HEK293T (cell line): ENCODE measurements at regions of chr19 and their contacts with region 1.

Region 1: DNA sequence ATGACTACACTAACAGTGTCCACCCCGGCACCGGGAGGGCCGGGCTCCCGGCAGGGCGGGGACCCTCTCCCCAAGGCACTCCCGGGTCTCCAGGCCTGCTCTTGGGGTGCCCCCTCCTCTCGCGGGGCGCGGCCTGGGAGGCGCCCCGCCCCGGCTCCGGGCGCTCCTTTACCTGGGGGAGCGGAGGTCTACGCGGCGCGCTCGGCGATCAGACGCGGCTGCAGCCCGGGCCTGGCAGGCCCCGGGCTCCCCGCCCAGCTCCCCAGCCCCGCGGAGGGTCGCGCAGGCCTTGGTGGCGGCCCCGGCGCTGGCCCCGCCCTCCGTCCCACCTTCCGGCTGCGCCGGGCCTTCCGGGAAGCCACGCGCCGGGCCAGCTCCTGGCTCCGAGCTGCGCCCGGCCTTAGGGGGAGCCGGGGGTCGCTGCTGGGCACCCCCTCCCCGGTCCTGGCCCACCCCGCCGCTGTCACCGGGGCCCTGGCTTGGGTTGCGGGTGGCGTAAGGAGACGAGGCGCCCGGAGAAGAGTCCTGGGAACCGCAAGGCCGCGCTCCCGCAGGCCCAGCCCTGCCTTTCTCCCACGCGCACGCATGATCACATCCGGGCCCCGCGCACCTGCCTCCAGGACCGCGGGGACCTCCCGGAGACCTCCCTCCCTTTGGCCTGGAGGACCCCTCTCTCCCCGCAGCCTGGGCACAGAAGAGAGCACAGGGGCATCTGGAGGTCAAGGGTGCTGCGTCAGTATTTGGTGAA is at the start of gene C19orf12:
- DNase-seq: peak; percentile 79

Region 2: DNA sequence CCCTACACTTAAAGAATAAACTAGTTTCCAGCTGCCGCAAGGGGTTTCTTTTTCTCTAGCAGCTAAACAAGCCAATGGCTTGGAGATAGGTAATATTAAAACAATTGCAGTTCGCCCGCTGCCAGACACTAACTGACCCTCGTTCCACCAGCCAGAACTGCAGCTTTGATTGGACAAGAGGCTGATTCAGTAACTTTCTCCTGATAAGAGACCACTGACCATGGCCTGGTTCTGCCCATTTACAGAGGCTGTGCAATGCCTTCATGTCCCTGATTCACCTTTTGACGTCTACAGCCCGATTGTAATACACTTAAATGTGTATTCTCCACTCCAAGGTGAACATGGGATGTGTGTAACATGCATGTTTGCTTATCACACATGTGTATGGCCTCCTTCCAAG is 12.8 kb after region 1 on chr19:
- CTCF ChIA-PET with region 1: interaction called, 10 read pairs
- POLR2A ChIA-PET with region 1: interaction called, 4 read pairs
- DNase-seq: no peak

Region 3: DNA sequence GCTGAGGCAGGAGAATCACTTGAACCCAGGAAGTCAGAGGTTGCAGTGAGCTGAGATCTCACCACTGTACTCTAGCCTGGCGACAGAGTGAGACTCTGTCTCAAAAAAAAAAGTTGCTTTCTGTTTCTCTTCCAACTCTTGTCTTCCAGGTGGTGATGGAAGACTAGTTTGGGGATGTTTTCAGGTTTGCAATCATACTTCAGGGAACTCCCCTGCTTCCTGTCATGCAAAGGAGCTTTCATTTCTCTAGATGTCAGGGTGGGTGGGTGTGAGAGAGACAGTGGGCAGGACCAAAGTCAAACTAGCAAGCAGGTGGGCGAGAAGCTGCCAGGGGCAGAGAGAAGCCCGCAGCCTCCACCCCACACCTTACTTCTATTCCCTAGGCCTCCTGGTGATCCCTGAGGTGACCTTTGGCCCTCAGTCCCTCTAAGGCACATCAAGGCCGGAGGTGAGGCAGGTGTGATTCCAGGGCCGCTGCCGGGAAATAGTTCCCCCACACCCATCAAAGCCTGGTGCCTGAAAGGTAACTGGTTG is 122.4 kb after region 1 on chr19:
- CTCF ChIA-PET with region 1: no interaction called
- POLR2A ChIA-PET with region 1: no interaction called
- DNase-seq: no peak